SK-N-SH (cell line): ENCODE measurements at regions of chr2 and their contacts with region 1.

Region 1: GRCh38 chr2:44291281-44292248 is 16.3 kb downstream of the SLC3A1 start:
- DNase-seq: peak; percentile 76
- H3K4me3 ChIP-seq: peak overlapping the region; percentile 1 to 46; a peak in 2 of 4 replicates
- H3K27ac ChIP-seq: peak overlapping the region in 1 of 2 experiments; percentile 58; a peak in 2 of 4 replicates
- H3K4me1 ChIP-seq: peaks cover 6 to 15% of the 10 kb centered on the region in 2 experiments; a peak in 2 of 4 replicates
- H3K27me3 ChIP-seq: no peaks in the 10 kb centered on the region
- CTCF ChIP-seq: peak; percentile 83
- EP300 ChIP-seq: peak in 1 of 2 experiments; percentile 14; a peak in 1 of 4 replicates
- RAD21 ChIP-seq: peak; percentile 91

Region 2: GRCh38 chr2:44038277-44038676 is 253.3 kb before region 1 on chr2:
- CTCF ChIA-PET with region 1: interaction called, 49 read pairs
- POLR2A ChIA-PET with region 1: no interaction called
- DNase-seq: no peak
- H3K4me3 ChIP-seq: no peak overlapping the region
- H3K27ac ChIP-seq: no peak overlapping the region
- H3K4me1 ChIP-seq: no peaks in the 10 kb centered on the region; a peak in 1 of 4 replicates
- H3K27me3 ChIP-seq: no peaks in the 10 kb centered on the region
- CTCF ChIP-seq: no peak
- EP300 ChIP-seq: no peak
- RAD21 ChIP-seq: no peak

Region 3: DNA sequence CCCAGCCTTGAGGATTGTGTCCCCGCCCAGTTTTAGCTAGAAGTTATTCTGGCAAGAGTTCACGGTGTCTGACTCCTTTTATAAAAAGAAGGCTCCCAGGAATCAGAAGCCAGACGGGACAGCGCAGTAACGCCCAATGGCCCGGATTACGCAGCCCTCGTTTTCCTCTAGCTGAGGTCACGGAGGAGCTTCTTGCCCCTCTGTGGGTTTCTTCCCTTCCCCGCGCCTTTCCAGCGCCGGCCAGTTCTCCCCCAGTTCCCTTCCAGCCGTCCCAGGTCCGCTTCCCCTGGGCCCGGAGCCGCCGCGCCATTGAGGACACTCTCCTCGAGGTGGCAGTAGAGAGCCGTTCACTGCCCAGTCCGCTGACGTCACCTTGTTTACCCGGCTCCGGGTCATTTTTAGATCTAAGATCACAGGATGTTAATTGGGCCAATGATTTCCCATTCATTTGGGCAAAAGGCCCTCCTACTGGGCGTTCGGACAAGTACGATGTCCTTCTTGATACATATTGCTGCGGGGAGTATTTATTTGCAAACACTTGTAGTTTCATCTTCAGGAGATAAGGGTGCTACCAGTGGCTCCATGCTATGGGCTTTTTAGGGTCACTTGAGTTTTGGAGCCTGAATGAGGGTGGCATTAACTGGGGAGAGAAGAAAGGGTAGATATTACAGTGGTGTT is 204.4 kb before region 1 on chr2:
- CTCF ChIA-PET with region 1: interaction called, 22 read pairs
- POLR2A ChIA-PET with region 1: no interaction called
- DNase-seq: peak; percentile 92
- H3K4me3 ChIP-seq: peak overlapping the region; percentile 42 to 62
- H3K27ac ChIP-seq: no peak overlapping the region; a peak in 1 of 4 replicates
- H3K4me1 ChIP-seq: peaks cover 0 to 13% of the 10 kb centered on the region in 2 experiments; a peak in 1 of 4 replicates
- H3K27me3 ChIP-seq: no peaks in the 10 kb centered on the region
- CTCF ChIP-seq: peak; percentile 99
- EP300 ChIP-seq: no peak
- RAD21 ChIP-seq: peak; percentile 94

Region 4: DNA sequence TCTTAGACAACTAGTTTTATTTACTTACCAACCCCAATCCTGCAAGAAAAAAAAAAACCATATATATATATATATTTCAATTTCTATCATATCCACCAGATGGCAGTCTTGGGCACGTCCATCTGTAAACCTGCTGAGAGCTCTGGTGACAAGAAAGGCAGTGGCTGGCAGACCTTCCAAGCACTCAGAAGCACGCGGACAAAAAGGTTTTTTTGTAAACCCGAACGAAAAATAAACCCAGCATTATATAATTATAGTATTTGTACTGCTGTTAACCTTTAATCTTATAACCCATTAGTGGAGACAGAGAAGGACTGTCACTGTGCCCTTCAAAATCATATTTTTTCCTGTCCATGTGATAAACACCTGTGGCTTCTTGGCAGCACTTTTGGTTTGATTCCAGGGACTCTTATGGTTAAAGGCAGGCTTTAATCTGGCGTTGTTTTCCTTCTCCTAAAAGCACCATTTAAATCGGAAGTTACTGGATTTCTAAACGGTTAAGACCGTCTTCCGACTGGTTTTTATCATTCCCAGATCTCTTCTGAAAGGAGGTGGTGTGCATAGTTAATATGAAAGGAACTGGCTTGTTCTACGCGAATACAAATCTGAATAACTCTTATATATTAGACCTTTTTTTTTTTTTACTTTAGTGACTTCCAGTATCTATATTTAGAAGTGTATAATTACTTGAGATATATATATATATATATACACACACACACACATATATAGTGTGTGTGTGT is 47.3 kb before region 1 on chr2:
- CTCF ChIA-PET with region 1: interaction called, 72 read pairs
- POLR2A ChIA-PET with region 1: no interaction called
- DNase-seq: peak; percentile 75
- H3K4me3 ChIP-seq: peak overlapping the region; percentile 43 to 55
- H3K27ac ChIP-seq: no peak overlapping the region
- H3K4me1 ChIP-seq: peaks cover 3 to 5% of the 10 kb centered on the region in 2 experiments; a peak in 2 of 4 replicates
- H3K27me3 ChIP-seq: no peaks in the 10 kb centered on the region
- CTCF ChIP-seq: peak; percentile 70
- EP300 ChIP-seq: no peak
- RAD21 ChIP-seq: peak; percentile 72

Region 5: DNA sequence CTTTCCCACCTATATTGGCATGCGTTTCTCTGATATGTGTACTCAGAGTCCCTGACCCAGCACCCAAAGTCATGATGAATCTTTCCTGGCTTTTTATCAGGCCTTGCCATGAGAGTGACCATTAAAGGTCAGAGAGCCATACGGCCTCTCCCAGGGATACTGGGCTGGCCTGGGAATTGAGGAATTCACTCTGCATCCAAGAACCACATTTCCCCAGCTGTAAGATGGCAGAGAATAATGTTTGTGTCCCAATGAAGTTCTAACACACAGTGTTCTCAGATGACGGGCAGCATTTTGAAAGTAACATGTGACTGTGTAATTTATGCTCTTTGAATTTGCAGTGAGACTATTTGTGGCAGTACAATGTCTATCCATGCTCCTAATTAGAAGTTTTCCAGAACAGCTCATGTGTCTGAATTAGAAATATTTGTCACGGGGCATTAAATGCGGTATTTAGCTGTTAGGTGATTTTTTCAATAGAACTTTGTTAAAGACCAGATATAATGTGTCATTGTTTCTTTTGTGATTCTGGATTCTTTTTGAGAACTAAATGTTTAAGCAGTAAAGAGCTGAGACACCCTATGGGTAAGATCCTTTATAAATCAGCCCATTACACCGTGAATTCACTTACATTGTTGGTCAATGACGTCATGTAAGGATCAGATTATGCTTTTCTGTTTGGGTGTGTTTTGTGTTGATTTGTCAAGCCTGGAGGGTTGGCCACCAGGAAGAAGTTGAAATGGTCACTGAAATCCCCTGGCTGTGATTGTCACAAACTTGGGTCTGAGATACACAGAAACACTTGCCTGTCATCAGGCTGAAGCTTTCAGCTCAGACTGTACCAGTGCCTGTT is 23.5 kb before region 1 on chr2:
- CTCF ChIA-PET with region 1: interaction called, 11 read pairs
- POLR2A ChIA-PET with region 1: no interaction called
- DNase-seq: no peak
- H3K4me3 ChIP-seq: no peak overlapping the region
- H3K27ac ChIP-seq: no peak overlapping the region
- H3K4me1 ChIP-seq: no peaks in the 10 kb centered on the region; a peak in 1 of 4 replicates
- H3K27me3 ChIP-seq: no peaks in the 10 kb centered on the region
- CTCF ChIP-seq: no peak
- EP300 ChIP-seq: no peak
- RAD21 ChIP-seq: no peak

Region 6: GRCh38 chr2:44314362-44314761 is 22.8 kb after region 1 on chr2:
- CTCF ChIA-PET with region 1: interaction called, 13 read pairs
- POLR2A ChIA-PET with region 1: no interaction called
- DNase-seq: peak; percentile 19
- H3K4me3 ChIP-seq: no peak overlapping the region
- H3K27ac ChIP-seq: no peak overlapping the region
- H3K4me1 ChIP-seq: peaks cover 0 to 2% of the 10 kb centered on the region in 2 experiments; a peak in 1 of 4 replicates
- H3K27me3 ChIP-seq: no peaks in the 10 kb centered on the region
- CTCF ChIP-seq: no peak
- EP300 ChIP-seq: no peak
- RAD21 ChIP-seq: no peak

Region 7: DNA sequence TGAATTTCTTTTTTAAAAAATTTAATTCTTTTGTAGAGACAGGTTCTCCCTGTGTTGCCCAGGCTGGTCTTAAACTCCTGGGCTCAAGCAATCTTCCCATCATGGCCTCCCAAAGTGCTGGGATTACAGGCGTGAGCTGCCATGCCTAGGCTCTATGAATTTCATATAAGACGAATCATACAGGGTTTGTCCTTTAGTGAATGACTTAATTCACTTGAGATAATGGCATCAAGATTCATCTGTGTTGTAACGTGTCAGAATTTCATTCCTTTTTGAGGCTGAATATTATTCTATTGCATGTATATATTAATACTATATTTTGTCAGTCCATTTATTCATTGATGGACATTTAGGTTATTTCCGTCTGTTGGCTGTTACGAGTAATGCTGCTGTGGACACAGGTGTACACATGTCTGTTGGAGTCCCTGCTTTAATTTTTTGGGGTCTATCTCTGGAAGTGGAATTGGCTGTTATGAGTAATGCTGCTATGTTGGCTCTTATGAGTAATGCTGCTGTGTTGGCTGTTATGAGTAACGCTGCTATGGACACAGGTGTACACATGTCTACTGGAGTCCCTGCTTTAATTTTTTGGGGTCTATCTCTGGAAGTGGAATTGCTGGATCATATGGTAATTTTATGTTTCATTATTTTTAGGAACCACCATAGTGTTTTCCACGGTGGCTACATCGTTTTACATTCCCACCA is 280.8 kb after region 1 on chr2:
- CTCF ChIA-PET with region 1: no interaction called
- POLR2A ChIA-PET with region 1: no interaction called
- DNase-seq: no peak
- H3K4me3 ChIP-seq: no peak overlapping the region
- H3K27ac ChIP-seq: no peak overlapping the region
- H3K4me1 ChIP-seq: peaks cover 0 to 12% of the 10 kb centered on the region in 2 experiments; a peak in 2 of 4 replicates
- H3K27me3 ChIP-seq: no peaks in the 10 kb centered on the region
- CTCF ChIP-seq: no peak
- EP300 ChIP-seq: no peak
- RAD21 ChIP-seq: no peak